A549 (cell line): ENCODE measurements at regions of chr17 and their contacts with region 1.

Region 1: GRCh38 chr17:1908699-1909309 is 79.0 kb downstream of the RPA1 start:
- DNase-seq: peak; percentile 81 to 85
- ATAC-seq: peak; percentile 88 to 96
- H3K4me3 ChIP-seq: no peak overlapping the region
- H3K27ac ChIP-seq: peak overlapping the region in 1 of 2 experiments; percentile 33; a peak in 1 of 6 replicates
- H3K4me1 ChIP-seq: peaks cover 9% of the 10 kb centered on the region; the same call in 1 of the 3 replicates
- CTCF ChIP-seq: peak; percentile 95
- EP300 ChIP-seq: no peak
- POLR2A ChIP-seq: no peak
- RAD21 ChIP-seq: peak; percentile 97

Region 2: DNA sequence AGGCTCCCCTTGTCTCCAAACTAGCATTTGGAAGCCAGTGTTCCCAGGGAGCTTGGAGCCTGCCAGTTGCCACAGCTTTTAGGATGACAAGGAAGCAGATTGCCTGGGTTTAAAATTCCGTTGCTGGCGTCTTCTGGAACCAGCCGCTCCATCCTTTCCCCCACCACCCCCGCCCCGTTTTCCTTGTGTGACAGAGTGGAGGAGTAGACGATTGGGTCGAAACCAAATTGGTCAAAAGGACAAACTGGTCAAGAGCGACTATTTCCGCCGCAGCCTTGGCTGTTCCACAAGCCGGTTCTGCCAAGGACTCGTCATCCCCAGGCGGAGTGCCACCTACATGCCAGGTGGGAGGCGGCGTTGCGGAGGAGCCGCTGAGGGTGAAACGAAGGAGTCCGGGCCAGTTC is 12.1 kb after region 1 on chr17:
- CTCF ChIA-PET with region 1: interaction called, 26 read pairs
- POLR2A ChIA-PET with region 1: no interaction called
- DNase-seq: no peak
- ATAC-seq: no peak
- H3K4me3 ChIP-seq: no peak overlapping the region
- H3K27ac ChIP-seq: no peak overlapping the region
- H3K4me1 ChIP-seq: no peaks in the 10 kb centered on the region
- CTCF ChIP-seq: no peak
- EP300 ChIP-seq: no peak
- POLR2A ChIP-seq: no peak
- RAD21 ChIP-seq: no peak

Region 3: DNA sequence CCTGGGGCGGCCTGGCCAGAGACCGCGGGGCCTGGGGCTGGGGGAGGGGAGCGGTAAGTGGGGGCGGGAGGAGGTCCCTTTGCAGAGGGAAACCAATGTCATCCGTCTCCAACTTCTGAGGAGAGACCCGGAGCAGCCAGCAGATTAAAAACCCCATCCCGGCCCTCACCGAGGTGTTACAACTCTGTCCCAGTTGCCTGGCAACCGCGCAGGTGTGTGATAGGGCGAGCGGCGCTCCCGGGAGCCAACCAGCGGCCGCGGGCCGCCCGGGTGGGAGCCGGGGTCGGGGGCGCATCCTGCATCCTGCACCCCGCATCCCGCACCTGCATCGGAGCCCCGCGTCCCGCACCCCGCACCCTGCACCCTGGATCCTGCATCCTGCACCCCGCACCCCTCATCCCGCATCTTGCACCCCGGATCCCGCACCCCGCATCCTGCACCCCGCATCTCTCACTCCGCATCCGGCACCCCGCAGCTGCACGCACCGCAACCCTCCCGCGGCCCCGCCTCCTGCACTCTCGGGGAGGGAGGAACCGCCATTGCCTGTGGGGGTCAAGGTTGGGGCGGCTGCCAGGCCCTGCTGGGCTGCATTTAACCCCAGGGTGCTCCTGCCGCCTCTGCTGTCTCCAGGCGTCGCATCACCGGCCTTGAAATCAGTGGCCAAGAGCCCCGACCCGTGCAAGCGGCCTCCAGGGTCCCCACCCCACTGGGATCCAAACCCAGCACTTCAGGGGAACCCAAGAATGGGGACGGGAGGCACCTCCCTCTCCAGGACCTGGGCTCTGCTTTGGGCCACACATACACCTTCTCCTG is 69.0 kb after region 1 on chr17:
- CTCF ChIA-PET with region 1: interaction called, 14 read pairs
- POLR2A ChIA-PET with region 1: no interaction called
- DNase-seq: no peak
- ATAC-seq: no peak
- H3K4me3 ChIP-seq: no peak overlapping the region
- H3K27ac ChIP-seq: no peak overlapping the region
- H3K4me1 ChIP-seq: peaks cover 10% of the 10 kb centered on the region; the same call in 2 of the 3 replicates
- CTCF ChIP-seq: no peak
- EP300 ChIP-seq: no peak
- POLR2A ChIP-seq: no peak
- RAD21 ChIP-seq: no peak

Region 4: DNA sequence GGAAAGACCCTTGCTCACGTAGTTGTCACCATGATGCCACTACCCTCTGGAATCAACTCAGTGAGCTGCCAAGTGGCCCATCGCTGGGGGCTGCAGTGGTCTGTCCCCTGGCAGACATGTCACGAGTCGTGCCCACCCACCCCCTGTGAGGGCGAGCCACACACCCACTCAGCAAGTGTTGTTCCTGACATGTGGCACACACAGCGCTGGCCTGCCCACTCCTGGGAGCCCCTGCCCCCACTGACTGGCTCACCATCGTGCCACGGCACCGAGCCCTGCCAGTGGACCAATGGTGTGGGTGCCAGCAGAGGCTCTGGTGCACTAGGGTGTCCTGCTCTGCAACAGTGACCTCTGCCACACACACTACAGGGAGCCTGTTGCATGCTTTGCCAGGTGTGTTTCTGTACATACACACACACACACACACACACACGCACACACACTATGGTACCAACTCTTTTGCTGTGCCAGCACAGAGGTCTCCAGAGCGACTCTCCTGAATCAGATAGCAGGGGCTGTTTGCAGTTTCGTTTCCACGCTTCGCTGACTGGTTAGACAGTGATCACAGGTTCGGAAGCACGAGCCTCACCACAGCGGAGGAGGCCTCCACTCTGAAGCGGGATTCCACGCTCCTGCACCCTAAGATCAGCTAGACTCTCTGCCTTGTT is 108.6 kb after region 1 on chr17:
- CTCF ChIA-PET with region 1: interaction called, 420 read pairs
- POLR2A ChIA-PET with region 1: no interaction called
- DNase-seq: no peak
- ATAC-seq: peak in 1 of 2 experiments; percentile 13; a peak in 3 of 6 replicates
- H3K4me3 ChIP-seq: no peak overlapping the region
- H3K27ac ChIP-seq: no peak overlapping the region
- H3K4me1 ChIP-seq: no peaks in the 10 kb centered on the region
- CTCF ChIP-seq: no peak
- EP300 ChIP-seq: no peak
- POLR2A ChIP-seq: no peak
- RAD21 ChIP-seq: no peak

Region 5: DNA sequence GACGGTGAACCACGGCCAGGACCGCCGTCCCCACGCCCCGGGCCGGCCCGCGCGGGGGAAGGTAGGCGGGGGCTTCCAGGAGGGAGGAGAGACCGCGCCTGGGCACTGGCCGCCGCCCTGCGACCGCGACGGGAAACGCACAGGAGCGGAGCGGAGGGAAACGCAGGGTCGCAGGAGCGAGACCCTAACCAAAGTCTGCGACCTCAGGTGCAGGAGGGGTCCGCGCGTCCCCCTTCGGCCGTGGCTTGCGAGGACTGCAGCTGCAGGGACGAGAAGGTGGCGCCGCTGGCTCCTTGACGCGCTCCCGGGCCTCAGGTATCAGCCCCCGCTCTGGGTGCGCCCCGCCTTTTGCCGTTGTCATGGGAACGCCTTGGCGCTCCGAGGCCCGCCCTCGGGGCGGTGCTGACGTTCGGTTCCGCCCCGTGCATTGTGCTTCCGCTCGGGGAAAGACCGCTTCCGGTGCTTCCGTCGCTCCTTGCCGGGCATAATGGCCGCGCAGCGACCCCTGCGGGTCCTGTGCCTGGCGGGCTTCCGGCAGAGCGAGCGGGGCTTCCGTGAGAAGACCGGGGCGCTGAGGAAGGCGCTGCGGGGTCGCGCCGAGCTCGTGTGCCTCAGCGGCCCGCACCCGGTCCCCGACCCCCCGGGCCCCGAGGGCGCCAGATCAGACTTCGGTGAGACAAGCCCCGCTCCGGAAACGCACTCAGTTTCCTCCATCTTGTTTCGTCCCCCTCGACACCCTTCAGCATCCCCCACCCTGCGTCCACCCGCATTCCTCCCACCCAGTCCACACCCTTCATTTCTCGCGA is 133.0 kb after region 1 on chr17 and contains the start of gene OVCA2:
- CTCF ChIA-PET with region 1: interaction called, 35 read pairs
- POLR2A ChIA-PET with region 1: interaction called, 4 read pairs
- DNase-seq: peak; percentile 94 to 96
- ATAC-seq: peak; percentile 82 to 91
- H3K4me3 ChIP-seq: peak within 1 kb of the TSS; percentile 85
- H3K27ac ChIP-seq: peak within 1 kb of the TSS; percentile 93 to 99
- H3K4me1 ChIP-seq: peaks cover 24% of the 10 kb centered on the region
- CTCF ChIP-seq: peak; percentile 47
- EP300 ChIP-seq: no peak
- POLR2A ChIP-seq: peak; percentile 71
- RAD21 ChIP-seq: peak; percentile 56 to 61
- polyA plus RNA-seq, gene OVCA2: 66.3 and 73.1 TPM in 2 replicates